ENCODE measurements at regions of chr16 and their contacts with region 1.

Region 1: DNA sequence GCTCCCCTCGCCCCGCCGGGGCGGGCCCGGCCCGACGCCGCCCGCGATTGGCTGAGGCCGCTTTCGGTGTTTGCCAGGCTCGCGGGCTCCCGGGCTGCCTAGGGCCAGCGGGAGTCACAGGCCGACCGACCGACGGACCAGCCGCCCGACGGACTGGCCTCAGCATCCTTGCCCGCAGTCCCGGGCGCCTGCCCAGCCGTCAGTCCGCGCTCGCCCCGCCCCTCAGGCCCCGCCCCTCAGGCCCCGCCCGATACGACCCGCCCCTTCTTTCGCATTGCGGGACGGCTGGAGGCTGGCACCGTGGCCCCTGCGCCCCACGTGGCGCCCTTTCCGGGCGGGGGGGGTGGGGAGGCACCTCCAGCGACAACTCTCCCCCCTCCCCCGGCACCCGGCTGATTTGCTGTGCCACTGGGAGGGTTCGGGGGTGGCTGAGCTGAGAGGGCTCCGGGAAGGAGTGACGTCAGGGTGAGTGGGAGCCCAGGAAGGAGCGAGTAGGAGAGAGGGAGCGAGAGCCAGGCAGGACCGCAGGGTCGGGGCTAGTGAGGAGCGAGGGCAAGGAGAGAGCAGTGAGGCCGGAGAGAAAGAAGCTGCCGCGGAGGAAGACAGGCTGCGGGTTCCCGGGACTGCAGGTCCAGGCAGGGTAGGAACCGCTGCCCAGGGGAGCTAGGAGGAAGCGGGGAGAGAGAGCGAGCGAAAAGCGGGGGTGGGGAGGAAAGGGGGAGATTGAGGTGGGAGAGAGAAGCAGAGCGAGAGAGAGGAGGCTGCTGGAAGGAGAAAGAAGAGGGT is at the start of gene ASPHD1:
- DNase-seq: peak; percentile 86
- ATAC-seq: peak; percentile 72
- H3K4me3 ChIP-seq: peak within 1 kb of the TSS; percentile 84 to 99 (median 86)
- H3K27ac ChIP-seq: peak within 1 kb of the TSS; percentile 71
- H3K4me1 ChIP-seq: peaks cover 45% of the 10 kb centered on the region
- H3K27me3 ChIP-seq: no peaks in the 10 kb centered on the region; a peak in 1 of 5 replicates
- CTCF ChIP-seq: no peak; the same call in 1 of the 2 replicates
- EP300 ChIP-seq: 0 out of 4 replicates have a peak, but pooled peaks of 1 of the 2 experiments have one; percentile 8
- POLR2A ChIP-seq: peak in 1 of 2 experiments; percentile 59; a peak in 2 of 4 replicates
- RAD21 ChIP-seq: peak; percentile 47; the same call in 1 of the 2 replicates
- total RNA-seq, gene ASPHD1: 15.6 and 19.7 TPM in 2 replicates

Region 2: DNA sequence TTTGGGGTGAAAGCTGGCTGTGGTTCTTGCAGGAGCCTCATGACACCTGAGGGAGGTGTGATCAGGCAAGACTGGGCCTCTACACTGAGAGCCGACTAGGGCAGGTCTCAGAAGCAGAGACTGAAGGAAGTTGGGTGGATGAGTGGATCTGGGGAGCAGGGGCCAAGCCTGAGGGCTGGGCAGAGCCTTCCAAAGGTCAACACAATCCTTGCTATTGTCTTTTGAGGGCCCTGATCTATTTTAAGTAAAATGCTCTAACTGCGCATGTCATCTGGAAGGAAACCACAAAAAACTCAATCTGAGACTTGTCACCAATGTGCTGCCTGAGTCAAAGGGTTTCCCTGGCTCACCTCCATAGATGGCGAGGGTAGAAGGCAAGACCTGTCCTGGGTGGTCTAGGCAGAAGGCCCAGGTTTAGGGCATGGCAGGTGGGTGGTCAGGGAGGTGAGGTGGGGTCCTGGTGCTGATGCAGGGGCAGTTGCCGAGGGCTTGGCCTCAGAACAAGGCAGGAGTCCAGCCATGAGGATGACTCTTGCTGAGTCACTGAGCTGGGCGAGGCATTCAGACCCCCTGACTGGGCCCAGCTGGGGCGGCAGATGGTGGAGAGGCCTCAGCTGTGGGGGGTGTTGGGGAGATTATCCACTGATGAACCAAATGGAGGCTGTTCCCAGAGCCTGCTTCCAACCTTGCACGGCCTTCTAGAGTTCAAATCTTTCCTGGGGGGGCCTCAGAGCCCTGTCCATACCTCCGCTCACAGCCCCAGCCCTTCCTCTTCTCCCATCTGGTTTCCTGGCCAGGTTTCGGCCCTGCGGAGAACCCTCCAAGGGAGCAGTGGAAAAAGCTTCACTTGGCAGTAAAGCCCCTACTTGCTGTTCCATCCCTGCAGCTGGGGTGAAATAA is 74.9 kb before region 1 on chr16:
- CTCF ChIA-PET with region 1: no interaction called
- POLR2A ChIA-PET with region 1: interaction called, 15 read pairs
- in situ Hi-C with region 1: no loop called
- intact Hi-C with region 1: no loop called
- DNase-seq: no peak
- ATAC-seq: peak; percentile 2; the same call in 2 of the 3 replicates
- H3K4me3 ChIP-seq: no peak overlapping the region
- H3K27ac ChIP-seq: peak overlapping the region; percentile 16
- H3K4me1 ChIP-seq: peaks cover 100% of the 10 kb centered on the region
- H3K27me3 ChIP-seq: no peaks in the 10 kb centered on the region
- CTCF ChIP-seq: no peak
- EP300 ChIP-seq: no peak
- POLR2A ChIP-seq: no peak
- RAD21 ChIP-seq: no peak

Region 3: DNA sequence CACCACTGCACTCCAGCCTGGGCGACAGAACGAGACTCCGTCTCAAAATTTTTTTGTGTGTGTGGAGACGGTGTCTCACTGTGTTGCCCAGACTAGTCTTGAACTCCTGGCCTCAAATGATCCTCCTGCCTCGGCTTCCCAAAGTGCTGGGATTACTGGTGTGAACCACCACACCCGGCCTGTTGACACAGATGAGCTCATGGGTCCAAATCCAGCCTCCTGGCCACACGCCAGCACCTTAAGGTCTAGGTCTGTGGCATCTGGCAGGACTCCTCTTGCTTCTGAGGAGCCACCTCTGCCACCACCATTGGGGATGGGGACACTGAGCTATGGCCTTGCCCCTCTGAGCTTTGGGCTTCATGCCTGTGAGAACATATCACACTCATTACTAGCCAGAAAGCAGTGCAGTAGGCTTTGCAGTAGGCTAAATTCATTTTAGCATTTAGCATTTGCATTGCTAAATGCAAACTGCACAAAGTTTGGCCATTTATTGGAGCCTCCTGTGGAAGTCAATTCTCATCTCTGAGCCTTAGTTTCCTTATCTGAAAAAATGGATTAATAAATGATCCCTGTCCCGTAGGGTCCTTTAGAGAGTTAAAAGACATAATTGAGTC is 31.8 kb before region 1 on chr16:
- CTCF ChIA-PET with region 1: no interaction called
- POLR2A ChIA-PET with region 1: interaction called, 29 read pairs
- in situ Hi-C with region 1: no loop called
- intact Hi-C with region 1: loop called (anchors 2 kb)
- DNase-seq: no peak
- ATAC-seq: no peak
- H3K4me3 ChIP-seq: no peak overlapping the region
- H3K27ac ChIP-seq: no peak overlapping the region
- H3K4me1 ChIP-seq: peaks cover 21% of the 10 kb centered on the region
- H3K27me3 ChIP-seq: no peaks in the 10 kb centered on the region
- CTCF ChIP-seq: no peak
- EP300 ChIP-seq: no peak
- POLR2A ChIP-seq: no peak
- RAD21 ChIP-seq: no peak

Region 4: DNA sequence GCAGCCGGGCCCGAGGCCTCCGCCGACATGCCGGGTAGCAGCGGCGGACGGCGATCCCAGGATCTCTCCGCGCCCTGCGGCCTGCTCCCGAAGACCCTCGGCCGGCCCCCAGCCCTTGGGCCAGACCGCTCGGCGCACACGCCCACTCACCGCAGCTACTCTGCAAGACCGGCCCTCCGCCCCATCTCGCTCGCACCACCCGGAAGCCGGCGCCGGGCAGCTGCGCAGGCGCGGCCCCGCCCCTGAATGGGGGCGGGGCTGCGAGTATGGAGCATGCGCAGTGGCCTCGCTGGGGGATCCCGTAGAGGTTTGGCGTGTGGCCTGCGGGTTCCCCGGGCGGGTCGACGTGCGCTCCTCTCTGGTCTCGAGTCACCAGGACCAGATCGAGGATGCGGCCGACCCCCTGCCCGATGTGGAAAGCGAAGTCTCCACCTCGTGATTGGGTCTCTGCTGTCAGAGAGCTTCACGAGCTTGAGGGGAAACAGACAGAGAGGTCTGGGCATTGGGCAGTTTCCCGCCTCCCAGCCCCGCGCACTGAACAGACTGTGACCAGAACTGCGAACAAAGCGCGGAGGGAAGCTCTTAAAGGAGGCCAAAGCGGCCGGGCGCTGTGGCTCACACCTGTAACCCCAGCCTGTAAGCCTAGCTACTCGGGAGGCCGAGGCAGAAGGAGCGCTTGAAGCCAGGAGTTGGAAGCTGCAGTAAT is 25.9 kb after region 1 on chr16 and contains the start of gene KCTD13:
- CTCF ChIA-PET with region 1: no interaction called
- POLR2A ChIA-PET with region 1: interaction called, 68 read pairs
- in situ Hi-C with region 1: no loop called
- intact Hi-C with region 1: no loop called
- DNase-seq: peak; percentile 82
- ATAC-seq: peak; percentile 96
- H3K4me3 ChIP-seq: peak within 1 kb of the TSS; percentile 80 to 96 (median 87)
- H3K27ac ChIP-seq: peak within 1 kb of the TSS; percentile 77
- H3K4me1 ChIP-seq: peaks cover 31% of the 10 kb centered on the region
- H3K27me3 ChIP-seq: no peaks in the 10 kb centered on the region
- CTCF ChIP-seq: no peak; the same call in 1 of the 2 replicates
- EP300 ChIP-seq: no peak
- POLR2A ChIP-seq: peak; percentile 79 to 99
- RAD21 ChIP-seq: peak; percentile 55
- total RNA-seq, gene KCTD13: 3.9 and 6.3 TPM in 2 replicates

Region 5: GRCh38 chr16:29961479-29962343 is 61.4 kb after region 1 on chr16 and contains the start of gene TMEM219:
- CTCF ChIA-PET with region 1: no interaction called
- POLR2A ChIA-PET with region 1: interaction called, 6 read pairs
- in situ Hi-C with region 1: no loop called
- intact Hi-C with region 1: loop called (anchors 5 kb)
- DNase-seq: peak; percentile 81
- ATAC-seq: peak; percentile 78
- H3K4me3 ChIP-seq: peak within 1 kb of the TSS; percentile 65 to 87 (median 80)
- H3K27ac ChIP-seq: peak within 1 kb of the TSS; percentile 81
- H3K4me1 ChIP-seq: peaks cover 56% of the 10 kb centered on the region
- H3K27me3 ChIP-seq: no peaks in the 10 kb centered on the region; a peak in 1 of 5 replicates
- CTCF ChIP-seq: no peak; the same call in 1 of the 2 replicates
- EP300 ChIP-seq: no peak
- POLR2A ChIP-seq: peak; percentile 70 to 89
- RAD21 ChIP-seq: peak; percentile 71
- total RNA-seq, gene TMEM219: 64.5 and 105 TPM in 2 replicates

Region 6: DNA sequence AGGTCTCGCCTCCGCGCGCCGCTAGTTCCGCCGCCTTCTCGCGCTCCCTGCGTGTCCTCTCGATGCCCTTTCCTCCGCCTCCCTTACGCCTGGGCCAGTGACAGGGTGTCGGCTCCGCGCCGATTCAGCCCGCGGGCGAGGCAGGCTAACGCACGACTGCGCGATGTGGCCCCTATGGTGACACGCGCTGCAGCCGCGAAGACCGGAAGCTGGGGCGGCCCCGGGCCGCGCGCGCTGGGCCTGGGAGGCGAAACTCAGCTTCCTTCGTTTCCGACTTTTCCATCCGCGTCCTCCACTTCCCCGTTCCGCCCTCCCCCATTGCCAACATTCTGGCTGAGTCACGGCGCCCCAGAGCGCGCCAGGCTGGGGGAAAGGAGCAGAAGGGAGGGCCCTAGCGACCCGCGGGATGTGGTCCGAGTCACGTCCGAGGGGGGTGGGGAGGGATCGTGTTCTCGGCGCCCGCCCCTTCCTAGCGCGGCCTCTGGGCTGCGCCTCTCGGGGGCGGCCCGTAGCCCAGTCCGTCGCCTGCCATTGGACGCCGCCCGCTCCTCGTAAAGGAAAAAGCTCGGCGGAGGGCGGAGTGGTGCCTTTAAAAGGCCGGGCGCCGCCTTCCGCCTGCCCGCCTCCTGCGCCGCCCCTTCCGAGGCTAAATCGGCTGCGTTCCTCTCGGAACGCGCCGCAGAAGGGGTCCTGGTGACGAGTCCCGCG is 165.0 kb after region 1 on chr16 and contains the start of gene ALDOA:
- CTCF ChIA-PET with region 1: no interaction called
- POLR2A ChIA-PET with region 1: interaction called, 10 read pairs
- in situ Hi-C with region 1: no loop called
- intact Hi-C with region 1: no loop called
- DNase-seq: peak; percentile 96
- ATAC-seq: peak; percentile 89
- H3K4me3 ChIP-seq: peak within 1 kb of the TSS; percentile 92 to 100 (median 95)
- H3K27ac ChIP-seq: peak within 1 kb of the TSS; percentile 95
- H3K4me1 ChIP-seq: peaks cover 46% of the 10 kb centered on the region
- H3K27me3 ChIP-seq: peaks cover 0 to 2% of the 10 kb centered on the region in 2 experiments; a peak in 1 of 5 replicates
- CTCF ChIP-seq: peak; percentile 19
- EP300 ChIP-seq: peak; percentile 3 to 87; a peak in 3 of 4 replicates
- POLR2A ChIP-seq: peak in 1 of 2 experiments; percentile 96; a peak in 2 of 4 replicates
- RAD21 ChIP-seq: peak; percentile 62; the same call in 1 of the 2 replicates
- total RNA-seq, gene ALDOA: 925 and 999 TPM in 2 replicates

Measured in HepG2 (cell line).